ENCODE measurements at regions of chr1 and their contacts with region 1.

Region 1: GRCh38 chr1:226736908-226737818 is 1.9 kb downstream of the ITPKB start:
- DNase-seq: peak; percentile 59 to 82 (median 73)
- H3K4me3 ChIP-seq: peak overlapping the region; percentile 62 to 97 (median 89)
- H3K27ac ChIP-seq: peak overlapping the region; percentile 92 to 100 (median 98)
- H3K27me3 ChIP-seq: no peaks in the 10 kb centered on the region
- CTCF ChIP-seq: peak in 36 of 56 donors; percentile 1 to 52 (median 32)

Region 2: DNA sequence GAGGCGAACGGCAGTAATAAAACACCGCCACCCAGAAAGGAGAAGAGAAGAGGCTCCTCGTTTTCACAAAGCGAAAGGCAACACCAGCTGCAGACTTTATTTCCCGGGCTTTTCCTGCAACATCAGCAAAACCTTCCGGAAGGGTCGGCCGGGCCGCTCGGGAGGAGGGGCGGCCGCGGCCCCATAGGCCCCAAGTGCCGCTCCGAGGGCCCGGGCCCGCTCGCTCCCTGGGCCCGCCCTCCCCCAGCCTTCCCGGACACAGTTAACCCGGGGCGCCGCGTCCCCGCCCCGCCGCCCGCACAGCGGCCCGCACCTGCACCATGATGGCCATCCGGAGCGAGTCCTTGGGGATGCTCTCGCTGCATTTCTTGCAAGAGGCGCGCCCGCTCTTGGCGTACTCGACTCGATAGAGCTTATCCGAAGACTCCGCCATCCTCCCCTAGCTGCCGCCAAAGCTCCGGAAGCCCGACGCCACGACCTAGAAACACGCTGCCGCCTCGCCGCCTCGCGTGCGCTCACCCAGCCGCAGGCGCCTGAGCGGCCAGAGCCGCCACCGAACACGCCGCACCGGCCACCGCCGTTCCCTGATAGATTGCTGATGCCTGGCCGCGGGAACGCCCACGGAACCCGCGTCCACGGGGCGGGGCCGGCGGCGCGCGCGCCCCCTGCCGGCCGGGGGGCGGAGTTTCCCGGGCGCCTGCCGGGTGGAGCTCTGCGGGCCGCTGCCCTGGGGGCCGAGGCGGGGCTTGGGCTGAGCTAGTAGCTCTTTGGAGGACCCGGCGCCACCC is 329.5 kb before region 1 on chr1 and contains the start of gene PARP1:
- intact Hi-C with region 1: loop called in 1 of 2 experiments (anchors 5 kb)
- DNase-seq: peak; percentile 73 to 90 (median 82)
- H3K4me3 ChIP-seq: peak within 1 kb of the TSS; percentile 48 to 90 (median 83)
- H3K27ac ChIP-seq: peak within 1 kb of the TSS; percentile 39 to 92 (median 86)
- H3K27me3 ChIP-seq: no peaks in the 10 kb centered on the region
- CTCF ChIP-seq: peak; percentile 38 to 99 (median 84)
- total RNA-seq, gene PARP1: 74.8 to 140 (median 105) TPM

Region 3: DNA sequence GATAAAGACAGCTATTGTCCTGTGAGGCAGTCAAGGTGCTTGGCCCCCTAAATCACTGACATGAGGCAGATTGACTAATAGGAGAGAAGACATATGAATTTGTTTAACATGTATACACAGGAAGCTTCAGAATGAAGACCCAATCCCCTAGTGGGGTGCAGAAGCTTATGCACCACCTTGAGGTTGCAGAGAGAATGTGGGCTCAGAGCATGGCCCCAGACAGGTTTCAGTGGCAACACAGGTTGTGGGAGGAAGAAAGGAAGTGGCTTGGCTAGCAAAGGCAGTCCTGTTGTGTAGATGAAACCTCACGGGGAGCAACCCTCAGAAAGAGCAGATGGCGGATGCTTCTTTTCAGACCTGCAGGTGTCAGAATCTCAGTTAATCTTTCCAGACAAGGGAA is 292.3 kb before region 1 on chr1:
- intact Hi-C with region 1: no loop called
- DNase-seq: peak in 1 of 10 donors; percentile 63
- H3K4me3 ChIP-seq: no peak overlapping the region
- H3K27ac ChIP-seq: peak overlapping the region in 1 of 59 donors; percentile 26
- H3K27me3 ChIP-seq: no peaks in the 10 kb centered on the region
- CTCF ChIP-seq: no peak

Region 4: GRCh38 chr1:226547754-226548191 is 189.4 kb before region 1 on chr1:
- intact Hi-C with region 1: loop called in 1 of 2 experiments (anchors 10 kb)
- DNase-seq: peak; percentile 59 to 85 (median 78)
- H3K4me3 ChIP-seq: peak overlapping the region in 41 of 59 donors; percentile 14 to 73 (median 66)
- H3K27ac ChIP-seq: peak overlapping the region in 2 of 59 donors; percentile 11 to 63
- H3K27me3 ChIP-seq: peaks cover 0 to 6% (median 0%) of the 10 kb centered on the region in 45 donors
- CTCF ChIP-seq: peak; percentile 59 to 88 (median 76)

Region 5: GRCh38 chr1:226679853-226680516 is 57.2 kb before region 1 on chr1:
- intact Hi-C with region 1: loop called in 1 of 2 experiments (anchors 10 kb)
- DNase-seq: peak; percentile 73 to 88 (median 80)
- H3K4me3 ChIP-seq: peak overlapping the region in 58 of 59 donors; percentile 23 to 70 (median 49)
- H3K27ac ChIP-seq: peak overlapping the region in 49 of 59 donors; percentile 78 to 99 (median 96)
- H3K27me3 ChIP-seq: no peaks in the 10 kb centered on the region
- CTCF ChIP-seq: peak in 1 of 56 donors; percentile 15

Region 6: GRCh38 chr1:226702957-226703831 is 34.0 kb before region 1 on chr1:
- intact Hi-C with region 1: loop called (anchors 1 to 5 kb)
- DNase-seq: peak; percentile 52 to 90 (median 68)
- H3K4me3 ChIP-seq: peak overlapping the region; percentile 52 to 87 (median 72)
- H3K27ac ChIP-seq: peak overlapping the region; percentile 90 to 100 (median 99)
- H3K27me3 ChIP-seq: no peaks in the 10 kb centered on the region
- CTCF ChIP-seq: peak in 33 of 56 donors; percentile 1 to 55 (median 25)

Region 7: GRCh38 chr1:226786550-226786949 is 49.4 kb after region 1 on chr1:
- intact Hi-C with region 1: loop called (anchors 2 to 5 kb)
- DNase-seq: no peak
- H3K4me3 ChIP-seq: peak overlapping the region in 1 of 59 donors; percentile 15
- H3K27ac ChIP-seq: peak overlapping the region in 56 of 59 donors; percentile 18 to 97 (median 78)
- H3K27me3 ChIP-seq: no peaks in the 10 kb centered on the region
- CTCF ChIP-seq: no peak